Ascending aorta (tissue), 2 donors: ENCODE measurements at regions of chr1 and their contacts with region 1.

Region 1: GRCh38 chr1:233790662-233791375 is 113.7 kb upstream of the SLC35F3 start:
- DNase-seq: peak in 1 of 2 donors; percentile 63
- H3K4me3 ChIP-seq: no peak overlapping the region
- H3K27ac ChIP-seq: no peak overlapping the region
- H3K4me1 ChIP-seq: no peaks in the 10 kb centered on the region
- H3K27me3 ChIP-seq: no peaks in the 10 kb centered on the region
- CTCF ChIP-seq: peak; percentile 68 to 83 (median 80)

Region 2: GRCh38 chr1:233440951-233441401 is 349.8 kb before region 1 on chr1:
- intact Hi-C with region 1: loop called (anchors 1 kb)
- DNase-seq: no peak
- H3K4me3 ChIP-seq: no peak overlapping the region
- H3K27ac ChIP-seq: no peak overlapping the region
- H3K4me1 ChIP-seq: no peaks in the 10 kb centered on the region
- H3K27me3 ChIP-seq: no peaks in the 10 kb centered on the region
- CTCF ChIP-seq: peak in 2 of 3 experiments; percentile 35 to 53

Region 3: DNA sequence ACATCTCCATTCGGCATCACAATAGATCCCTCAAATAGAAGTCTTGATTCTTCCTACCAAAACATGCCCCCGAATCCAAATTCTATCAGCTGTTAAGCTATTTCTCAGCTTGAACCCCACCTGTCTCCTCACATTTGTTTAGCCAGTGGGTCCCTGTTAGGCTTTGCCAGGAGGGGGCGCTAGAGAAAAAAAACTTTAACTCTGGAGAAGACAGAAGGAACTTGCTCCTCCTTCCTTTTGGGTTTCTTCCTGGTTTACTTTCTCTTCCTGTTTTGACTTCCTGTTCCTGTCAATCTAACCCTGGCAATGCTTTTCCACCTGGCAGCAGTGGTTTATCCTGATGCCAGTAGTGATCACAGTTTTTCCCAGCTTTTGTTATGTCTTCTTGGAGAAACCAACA is 272.5 kb before region 1 on chr1:
- intact Hi-C with region 1: loop called (anchors 10 kb)
- DNase-seq: no peak
- H3K4me3 ChIP-seq: no peak overlapping the region
- H3K27ac ChIP-seq: no peak overlapping the region
- H3K4me1 ChIP-seq: no peaks in the 10 kb centered on the region
- H3K27me3 ChIP-seq: no peaks in the 10 kb centered on the region
- CTCF ChIP-seq: peak in 1 of 3 experiments; percentile 14

Region 4: GRCh38 chr1:233777566-233777965 is 13.3 kb before region 1 on chr1:
- intact Hi-C with region 1: no loop called
- DNase-seq: no peak
- H3K4me3 ChIP-seq: no peak overlapping the region
- H3K27ac ChIP-seq: no peak overlapping the region
- H3K4me1 ChIP-seq: no peaks in the 10 kb centered on the region
- H3K27me3 ChIP-seq: no peaks in the 10 kb centered on the region
- CTCF ChIP-seq: no peak